Heart right ventricle (tissue), 16 donors: ENCODE measurements at regions of chr6 and their contacts with region 1.

Region 1: DNA sequence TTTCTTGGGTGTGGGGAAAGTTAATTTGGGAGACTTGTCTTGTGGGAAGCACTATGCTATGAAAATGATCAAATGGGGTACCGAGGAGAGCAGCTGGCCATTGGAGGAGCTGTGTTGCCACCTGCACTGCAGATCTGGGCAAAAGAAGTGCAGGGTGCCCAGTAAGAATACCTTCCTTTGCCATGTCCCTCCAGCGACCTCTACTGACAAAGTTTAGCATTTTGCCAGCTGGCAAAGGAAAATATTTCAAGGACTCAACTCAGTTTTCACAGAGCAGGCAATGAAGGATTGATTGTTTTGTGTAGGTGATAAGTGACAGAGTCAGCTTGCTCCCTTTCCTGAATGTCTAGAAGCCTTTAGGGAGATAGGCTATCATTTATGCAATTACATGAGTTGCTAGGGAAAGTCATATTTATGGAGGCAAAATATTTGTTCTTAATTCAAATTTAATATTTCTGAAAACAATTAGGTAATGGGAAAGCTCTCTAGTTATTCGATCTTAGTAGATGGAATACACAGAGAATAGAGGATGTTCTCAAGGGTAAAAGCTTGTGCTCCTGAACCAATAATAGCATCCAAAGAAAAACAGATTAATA is 118.4 kb downstream of the FARS2 start:
- DNase-seq: no peak
- ATAC-seq: no peak
- H3K4me3 ChIP-seq: no peak overlapping the region
- H3K27ac ChIP-seq: no peak overlapping the region
- H3K4me1 ChIP-seq: peaks cover 0 to 10% (median 0%) of the 10 kb centered on the region in 9 donors
- H3K27me3 ChIP-seq: no peaks in the 10 kb centered on the region
- CTCF ChIP-seq: peak in 6 of 9 donors; percentile 19 to 54 (median 28)

Region 2: GRCh38 chr6:5260661-5261544 is 118.8 kb before region 1 on chr6 and contains the starts of genes FARS2 and LYRM4:
- intact Hi-C with region 1: loop called in 1 of 10 experiments (anchors 10 kb)
- DNase-seq: peak; percentile 89 to 90
- ATAC-seq: peak; percentile 97 to 99 (median 98)
- H3K4me3 ChIP-seq: peak within 1 kb of the TSS; percentile 62 to 96 (median 84)
- H3K27ac ChIP-seq: peak within 1 kb of the TSS; percentile 92 to 100 (median 99)
- H3K4me1 ChIP-seq: peaks cover 0 to 27% (median 22%) of the 10 kb centered on the region in 9 donors
- H3K27me3 ChIP-seq: no peaks in the 10 kb centered on the region
- CTCF ChIP-seq: peak in 3 of 9 donors; percentile 34 to 67 (median 47)
- total RNA-seq, gene FARS2: 17.9 to 22.4 (median 21.4) TPM
- total RNA-seq, gene LYRM4: 20.9 to 33.0 (median 25.1) TPM

Region 3: DNA sequence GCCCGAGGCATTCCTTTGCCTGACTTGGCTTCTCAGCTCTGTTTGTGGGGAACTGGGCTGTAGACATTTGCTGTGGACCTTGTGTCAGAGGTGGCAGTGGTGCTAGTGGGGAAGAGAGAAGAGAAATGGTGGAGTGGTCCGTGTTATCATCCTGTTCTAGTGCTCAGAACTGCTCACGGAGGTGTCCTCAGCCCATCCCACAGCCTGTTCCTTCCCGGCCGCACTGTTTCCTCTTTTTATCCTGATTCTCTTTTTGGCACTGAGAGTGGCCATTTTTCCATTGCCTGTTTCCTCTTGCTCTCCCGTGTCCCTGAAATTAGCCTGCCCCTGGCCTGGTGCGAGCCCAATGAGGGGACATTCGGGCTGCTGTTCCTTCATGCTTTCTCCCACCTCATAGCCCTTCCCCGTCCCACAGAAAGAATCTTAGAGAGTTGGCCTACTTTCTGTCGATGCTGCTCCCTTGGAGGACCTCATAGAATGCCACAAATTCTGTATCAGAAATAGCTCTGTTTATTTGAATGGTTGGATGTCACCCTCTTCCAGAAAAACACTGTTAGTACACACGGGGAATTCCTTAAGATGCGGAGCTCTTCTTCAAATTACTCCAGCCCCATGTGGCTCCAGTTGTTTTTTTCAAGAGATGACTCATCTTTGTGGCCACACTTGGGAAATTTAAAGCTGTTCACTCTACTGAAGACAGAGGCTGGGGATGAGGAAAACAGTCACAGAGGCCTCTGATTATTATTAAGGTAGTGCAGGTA is 92.4 kb before region 1 on chr6:
- intact Hi-C with region 1: no loop called
- DNase-seq: peak in 1 of 2 donors; percentile 22
- ATAC-seq: peak; percentile 50 to 78 (median 72)
- H3K4me3 ChIP-seq: peak overlapping the region in 1 of 10 donors; percentile 3
- H3K27ac ChIP-seq: peak overlapping the region in 9 of 10 donors; percentile 8 to 66 (median 49)
- H3K4me1 ChIP-seq: peaks cover 6 to 29% (median 18%) of the 10 kb centered on the region in 9 donors
- H3K27me3 ChIP-seq: no peaks in the 10 kb centered on the region
- CTCF ChIP-seq: peak in 1 of 9 donors; percentile 7